ENCODE measurements at regions of chr13 and their contacts with region 1.

Region 1: GRCh38 chr13:36543671-36544070 is 111.4 kb downstream of the CCNA1 start:
- DNase-seq: no peak
- CTCF ChIP-seq: no peak

Region 2: DNA sequence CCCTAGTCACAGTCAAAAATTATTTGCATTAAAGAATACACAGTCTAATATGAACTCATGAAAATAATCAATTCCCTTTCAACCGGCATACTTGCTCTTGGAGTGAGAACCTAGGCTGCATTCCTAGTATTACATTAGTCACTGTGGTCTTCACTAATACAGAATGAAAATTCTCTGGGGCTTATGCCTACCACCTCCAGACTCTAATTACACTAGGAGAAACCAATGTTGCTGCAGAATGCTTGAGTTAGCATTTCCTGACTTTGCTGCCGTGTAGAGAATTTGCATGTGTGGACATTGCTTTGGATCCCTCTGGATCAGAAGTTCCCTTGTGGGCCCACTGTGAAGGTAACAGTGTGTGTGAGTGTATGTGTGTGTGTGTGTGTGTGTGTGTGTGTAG is 23.6 kb before region 1 on chr13:
- CTCF ChIA-PET with region 1: no interaction called
- POLR2A ChIA-PET with region 1: no interaction called
- DNase-seq: no peak
- CTCF ChIP-seq: no peak

Region 3: GRCh38 chr13:36531746-36532486 is 11.8 kb before region 1 on chr13:
- CTCF ChIA-PET with region 1: interaction called, 12 read pairs
- POLR2A ChIA-PET with region 1: no interaction called
- DNase-seq: no peak
- CTCF ChIP-seq: no peak